ENCODE measurements at regions of chr11 and their contacts with region 1.

Region 1: GRCh38 chr11:7688238-7688826 is 15.0 kb upstream of the CYB5R2 start:
- DNase-seq: no peak
- ATAC-seq: peak; percentile 58
- H3K4me3 Mint-ChIP-seq: no peak overlapping the region
- H3K27ac Mint-ChIP-seq: no peak overlapping the region
- H3K4me1 Mint-ChIP-seq: no peaks in the 10 kb centered on the region
- H3K27me3 Mint-ChIP-seq: peaks cover 12% of the 10 kb centered on the region
- CTCF ChIP-seq: peak; percentile 59

Region 2: GRCh38 chr11:6757373-6757967 is 930.9 kb before region 1 on chr11:
- CTCF ChIA-PET with region 1: no interaction called
- POLR2A ChIA-PET with region 1: no interaction called
- intact Hi-C with region 1: loop called (anchors 5 kb)
- DNase-seq: no peak
- ATAC-seq: peak; percentile 78
- H3K4me3 Mint-ChIP-seq: no peak overlapping the region
- H3K27ac Mint-ChIP-seq: no peak overlapping the region
- H3K4me1 Mint-ChIP-seq: no peaks in the 10 kb centered on the region
- H3K27me3 Mint-ChIP-seq: peaks cover 3% of the 10 kb centered on the region
- CTCF ChIP-seq: peak; percentile 41

Region 3: GRCh38 chr11:7098235-7098832 is 590.0 kb before region 1 on chr11:
- CTCF ChIA-PET with region 1: interaction called, 33 read pairs
- POLR2A ChIA-PET with region 1: no interaction called
- intact Hi-C with region 1: loop called (anchors 1 kb)
- DNase-seq: no peak
- ATAC-seq: peak; percentile 72
- H3K4me3 Mint-ChIP-seq: no peak overlapping the region
- H3K27ac Mint-ChIP-seq: no peak overlapping the region
- H3K4me1 Mint-ChIP-seq: no peaks in the 10 kb centered on the region
- H3K27me3 Mint-ChIP-seq: peaks cover 9% of the 10 kb centered on the region
- CTCF ChIP-seq: no peak

Region 4: GRCh38 chr11:7353100-7353499 is 335.2 kb before region 1 on chr11:
- CTCF ChIA-PET with region 1: interaction called, 16 read pairs
- POLR2A ChIA-PET with region 1: no interaction called
- intact Hi-C with region 1: loop called (anchors 1 kb)
- DNase-seq: peak; percentile 23
- ATAC-seq: peak; percentile 62
- H3K4me3 Mint-ChIP-seq: no peak overlapping the region
- H3K27ac Mint-ChIP-seq: no peak overlapping the region
- H3K4me1 Mint-ChIP-seq: peaks cover 3% of the 10 kb centered on the region
- H3K27me3 Mint-ChIP-seq: peaks cover 7% of the 10 kb centered on the region
- CTCF ChIP-seq: no peak

Region 5: GRCh38 chr11:7665473-7666291 is 22.6 kb before region 1 on chr11:
- CTCF ChIA-PET with region 1: interaction called, 16 read pairs
- POLR2A ChIA-PET with region 1: interaction called, 4 read pairs
- intact Hi-C with region 1: no loop called
- DNase-seq: peak; percentile 75
- ATAC-seq: peak; percentile 99
- H3K4me3 Mint-ChIP-seq: no peak overlapping the region
- H3K27ac Mint-ChIP-seq: no peak overlapping the region
- H3K4me1 Mint-ChIP-seq: peaks cover 5% of the 10 kb centered on the region
- H3K27me3 Mint-ChIP-seq: no peaks in the 10 kb centered on the region
- CTCF ChIP-seq: peak; percentile 51

Region 6: GRCh38 chr11:8099291-8099899 is 411.1 kb after region 1 on chr11:
- CTCF ChIA-PET with region 1: no interaction called
- POLR2A ChIA-PET with region 1: no interaction called
- intact Hi-C with region 1: loop called (anchors 10 kb)
- DNase-seq: peak; percentile 39
- ATAC-seq: peak; percentile 67
- H3K4me3 Mint-ChIP-seq: no peak overlapping the region
- H3K27ac Mint-ChIP-seq: no peak overlapping the region
- H3K4me1 Mint-ChIP-seq: no peaks in the 10 kb centered on the region
- H3K27me3 Mint-ChIP-seq: no peaks in the 10 kb centered on the region
- CTCF ChIP-seq: no peak

Measured in activated B cell treated with CpG ODN at 0.5 μM for 24 hours (primary cell).